OCI-LY7 (cell line): ENCODE measurements at regions of chr17 and their contacts with region 1.

Region 1: DNA sequence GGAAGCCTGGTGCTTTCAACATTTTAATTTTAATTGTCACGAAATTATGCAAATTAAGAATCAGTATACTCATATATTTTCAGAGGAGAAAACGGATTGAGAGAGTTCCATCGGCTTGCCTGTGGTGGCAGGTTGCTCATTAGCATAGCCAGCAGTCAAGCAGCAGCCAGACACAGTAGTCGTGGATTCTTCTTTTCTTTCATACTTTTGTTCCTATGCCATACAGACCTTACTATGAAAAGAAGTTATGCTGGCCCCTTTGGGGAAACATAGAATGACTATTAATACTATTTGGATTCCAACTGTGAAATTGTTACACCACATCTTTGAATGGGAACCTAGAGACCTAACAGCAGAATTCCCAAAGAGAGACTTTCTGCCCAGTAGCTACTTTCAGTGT is 617.7 kb upstream of the CA10 start:
- DNase-seq: no peak
- H3K4me3 ChIP-seq: no peak overlapping the region
- H3K27ac ChIP-seq: no peak overlapping the region
- H3K4me1 ChIP-seq: no peaks in the 10 kb centered on the region
- CTCF ChIP-seq: no peak

Region 2: GRCh38 chr17:52762147-52762793 is 14.0 kb before region 1 on chr17:
- CTCF ChIA-PET with region 1: no interaction called
- POLR2A ChIA-PET with region 1: no interaction called
- intact Hi-C with region 1: no loop called
- DNase-seq: no peak
- H3K4me3 ChIP-seq: no peak overlapping the region
- H3K27ac ChIP-seq: no peak overlapping the region
- H3K4me1 ChIP-seq: no peaks in the 10 kb centered on the region
- CTCF ChIP-seq: no peak

Region 3: DNA sequence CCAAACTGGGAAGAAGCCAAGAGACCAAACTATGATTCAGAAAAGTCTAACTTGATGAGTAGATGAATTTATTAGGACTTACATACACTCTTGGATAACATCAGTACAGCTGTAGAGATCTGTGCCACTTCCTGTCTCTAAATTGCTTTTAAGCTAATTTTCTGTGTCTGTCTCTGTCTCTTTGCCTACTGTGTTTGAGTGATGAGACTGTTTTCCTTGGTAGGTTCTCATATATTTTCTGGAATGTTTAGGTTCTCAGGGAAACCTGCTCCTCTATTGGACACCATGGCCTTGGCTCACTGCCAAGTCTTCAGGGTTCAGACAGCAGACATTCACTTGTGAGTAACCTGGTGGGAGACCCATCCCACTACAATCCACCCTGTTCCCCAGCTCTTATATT is 943.0 kb after region 1 on chr17:
- CTCF ChIA-PET with region 1: no interaction called
- POLR2A ChIA-PET with region 1: no interaction called
- intact Hi-C with region 1: loop called (anchors 5 kb)
- DNase-seq: no peak
- H3K4me3 ChIP-seq: no peak overlapping the region
- H3K27ac ChIP-seq: no peak overlapping the region
- H3K4me1 ChIP-seq: peaks cover 15% of the 10 kb centered on the region
- CTCF ChIP-seq: no peak